ENCODE measurements at regions of chr5 and their contacts with region 1.

Region 1: DNA sequence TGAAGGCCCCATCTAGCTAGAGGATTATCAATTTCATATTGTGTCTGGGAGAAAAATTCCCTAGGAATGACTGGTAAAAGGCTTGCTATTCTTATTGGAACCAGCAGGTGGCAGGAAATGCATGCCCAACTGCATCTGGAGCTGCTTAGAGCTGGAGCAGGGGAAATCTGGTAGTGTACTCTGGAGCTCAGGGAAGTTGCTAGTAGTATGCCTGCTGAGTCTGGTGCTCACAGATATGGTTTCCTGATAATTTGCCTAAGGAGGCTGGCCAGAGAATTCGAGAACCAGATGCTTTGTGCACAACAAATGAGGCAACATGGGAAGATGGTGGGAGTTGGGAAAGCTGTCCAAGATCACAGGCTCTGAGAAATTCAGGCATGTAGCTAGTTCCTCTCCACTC is 53.7 kb downstream of the G3BP1 start:
- DNase-seq: peak; percentile 85

Region 2: GRCh38 chr5:151779636-151780035 is 45.8 kb before region 1 on chr5:
- in situ Hi-C with region 1: no loop called
- DNase-seq: peak; percentile 70

Region 3: DNA sequence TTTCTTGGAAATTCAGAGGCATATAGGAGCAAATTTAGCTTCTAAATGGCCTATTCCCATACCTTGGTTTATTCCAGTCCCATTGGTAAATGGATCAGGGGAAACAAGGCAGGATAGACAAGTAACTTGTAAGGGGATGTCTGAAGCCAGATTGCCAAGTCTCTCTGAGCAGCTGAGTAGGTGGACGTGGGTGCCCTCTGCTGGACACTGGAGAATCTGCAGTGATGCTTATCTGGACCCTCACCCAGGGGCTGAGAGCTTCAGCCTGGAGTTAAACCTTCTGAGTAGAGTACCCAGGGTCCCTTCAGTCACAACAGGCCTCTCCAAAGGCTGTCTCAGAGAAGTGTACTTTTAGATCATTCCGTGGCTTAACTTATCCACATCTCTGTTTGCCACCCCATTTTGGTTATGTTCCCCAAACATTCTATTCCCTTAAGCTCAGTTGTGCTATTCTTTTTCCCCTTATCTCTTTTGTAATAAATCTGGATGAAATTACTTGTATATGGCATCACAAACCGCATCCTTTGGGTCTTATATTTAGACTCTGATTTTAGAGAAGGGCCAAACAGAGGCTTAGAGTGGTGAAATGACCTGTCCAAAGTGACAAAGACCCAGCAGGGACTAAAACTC is 317.5 kb after region 1 on chr5:
- in situ Hi-C with region 1: loop called (anchors 25 kb)
- DNase-seq: peak; percentile 67

Measured in G401 (cell line).